ENCODE measurements at regions of chr3 and their contacts with region 1.

Region 1: GRCh38 chr3:150577859-150578258 is 25.3 kb upstream of the SELENOT start:
- DNase-seq: no peak
- ATAC-seq: no peak
- H3K4me3 ChIP-seq: no peak overlapping the region
- H3K4me3 Mint-ChIP-seq: no peak overlapping the region
- H3K27ac ChIP-seq: no peak overlapping the region
- H3K27ac Mint-ChIP-seq: no peak overlapping the region
- H3K4me1 ChIP-seq: peaks cover 5% of the 10 kb centered on the region
- H3K4me1 Mint-ChIP-seq: peaks cover 34% of the 10 kb centered on the region
- H3K27me3 ChIP-seq: no peaks in the 10 kb centered on the region
- H3K27me3 Mint-ChIP-seq: no peaks in the 10 kb centered on the region
- CTCF ChIP-seq: no peak

Region 2: DNA sequence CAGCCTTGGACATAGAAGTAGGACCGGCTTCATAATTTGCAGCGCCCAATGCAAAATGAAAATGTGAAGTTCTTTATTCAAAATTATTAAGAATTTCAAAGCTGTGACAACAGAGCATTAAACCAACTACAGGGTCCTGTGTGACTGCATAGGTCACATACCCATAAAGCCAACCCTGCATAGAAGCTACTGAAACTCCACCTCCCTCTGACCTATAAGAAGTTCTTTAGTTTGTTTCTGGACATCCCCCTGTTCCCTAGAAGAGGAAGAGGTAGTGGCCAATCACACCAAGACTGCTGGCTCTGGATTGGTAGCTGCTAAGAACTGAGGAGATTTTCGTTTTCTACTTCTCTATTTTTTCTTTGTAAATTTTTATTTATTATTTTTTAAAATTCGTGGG is 16.3 kb after region 1 on chr3:
- CTCF ChIA-PET with region 1: interaction called, 3 read pairs
- POLR2A ChIA-PET with region 1: interaction called, 3 read pairs
- intact Hi-C with region 1: loop called in 1 of 2 experiments (anchors 2 kb)
- DNase-seq: no peak
- ATAC-seq: no peak
- H3K4me3 ChIP-seq: no peak overlapping the region
- H3K4me3 Mint-ChIP-seq: no peak overlapping the region
- H3K27ac ChIP-seq: no peak overlapping the region
- H3K27ac Mint-ChIP-seq: no peak overlapping the region
- H3K4me1 ChIP-seq: no peaks in the 10 kb centered on the region
- H3K4me1 Mint-ChIP-seq: peaks cover 6% of the 10 kb centered on the region
- H3K27me3 ChIP-seq: no peaks in the 10 kb centered on the region
- H3K27me3 Mint-ChIP-seq: no peaks in the 10 kb centered on the region
- CTCF ChIP-seq: no peak